ENCODE measurements at regions of chr3 and their contacts with region 1.

Region 1: DNA sequence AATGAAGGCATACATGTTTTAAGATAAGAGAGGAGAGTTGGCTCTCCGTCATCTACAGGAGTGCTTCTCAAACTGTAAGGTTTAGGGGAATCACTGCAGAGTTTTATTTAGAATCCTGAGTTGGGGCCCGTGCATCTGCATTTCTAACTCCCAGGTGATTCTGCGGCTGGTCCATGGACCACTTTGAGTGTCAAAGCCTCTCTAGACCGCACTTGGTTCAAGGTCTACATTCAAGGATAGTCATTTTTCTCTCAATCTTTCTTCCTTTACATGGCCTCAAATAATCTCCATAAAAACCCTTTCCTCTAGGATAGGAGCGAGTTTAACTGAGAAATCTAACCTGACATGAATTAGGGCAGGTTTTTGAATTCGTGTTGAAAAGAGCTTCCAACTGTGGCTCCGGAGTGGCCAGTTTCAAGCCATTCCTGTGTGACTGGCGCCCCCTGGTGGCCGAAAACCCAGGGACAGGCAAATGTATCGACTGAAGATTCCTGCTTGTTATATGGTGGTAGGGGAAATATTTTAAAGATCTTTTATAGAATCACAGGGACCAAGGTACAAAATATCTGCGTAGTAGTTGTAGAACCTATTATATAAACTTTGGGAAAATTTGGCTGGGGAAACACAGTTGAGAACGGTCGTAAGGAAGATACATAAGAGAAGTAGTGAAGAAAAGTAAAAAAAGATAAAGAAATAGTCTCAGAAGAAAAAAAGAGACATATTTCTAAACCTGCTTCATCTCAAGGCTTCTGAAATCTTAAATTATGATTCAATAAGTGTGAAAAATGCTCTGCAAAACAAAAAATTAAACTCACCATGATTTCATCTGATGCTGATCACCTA is 11.9 kb downstream of the GABRR3 start:
- DNase-seq: peak; percentile 82
- H3K4me3 Mint-ChIP-seq: no peak overlapping the region
- H3K27ac Mint-ChIP-seq: no peak overlapping the region
- H3K4me1 Mint-ChIP-seq: peaks cover 5% of the 10 kb centered on the region
- H3K27me3 Mint-ChIP-seq: no peaks in the 10 kb centered on the region
- CTCF ChIP-seq: peak; percentile 87

Region 2: GRCh38 chr3:96863129-96863740 is 1160.0 kb before region 1 on chr3:
- CTCF ChIA-PET with region 1: no interaction called
- POLR2A ChIA-PET with region 1: no interaction called
- intact Hi-C with region 1: loop called (anchors 10 kb)
- DNase-seq: peak; percentile 63
- H3K4me3 Mint-ChIP-seq: no peak overlapping the region
- H3K27ac Mint-ChIP-seq: no peak overlapping the region
- H3K4me1 Mint-ChIP-seq: no peaks in the 10 kb centered on the region
- H3K27me3 Mint-ChIP-seq: no peaks in the 10 kb centered on the region
- CTCF ChIP-seq: peak; percentile 76

Region 3: DNA sequence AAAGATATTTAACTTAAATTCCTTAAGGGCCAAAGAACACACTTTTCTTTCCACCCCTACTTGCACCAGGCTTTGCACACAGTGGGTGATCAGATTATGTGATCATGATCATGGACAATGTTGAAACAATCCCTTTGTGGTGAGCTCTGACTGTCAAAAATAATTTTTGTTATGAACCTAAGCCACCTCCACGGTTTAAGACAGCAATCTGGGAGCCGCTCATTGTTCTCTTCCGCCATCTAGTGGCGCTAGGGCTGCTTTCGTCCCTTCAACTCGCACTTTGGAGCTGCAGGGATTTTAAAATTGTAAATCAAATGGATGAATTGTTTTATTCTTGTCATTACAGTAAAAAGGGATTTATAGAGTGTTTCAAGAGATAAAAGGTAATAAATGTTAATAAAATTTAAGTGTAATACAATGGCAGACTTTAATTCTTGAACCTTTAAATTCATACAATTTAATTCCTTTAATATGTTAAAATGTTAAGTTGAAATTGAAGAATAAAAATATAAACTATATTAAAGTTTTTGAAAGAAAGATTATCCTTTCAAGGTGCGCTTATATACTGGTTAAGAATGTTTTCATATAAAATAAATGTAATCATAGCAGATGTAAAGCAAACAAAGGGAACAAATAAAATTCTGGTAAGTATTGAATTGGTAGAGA is 303.9 kb before region 1 on chr3:
- CTCF ChIA-PET with region 1: interaction called, 6 read pairs
- POLR2A ChIA-PET with region 1: no interaction called
- intact Hi-C with region 1: loop called (anchors 2 kb)
- DNase-seq: peak; percentile 83
- H3K4me3 Mint-ChIP-seq: peak overlapping the region; percentile 28
- H3K27ac Mint-ChIP-seq: no peak overlapping the region
- H3K4me1 Mint-ChIP-seq: no peaks in the 10 kb centered on the region
- H3K27me3 Mint-ChIP-seq: peaks cover 10% of the 10 kb centered on the region
- CTCF ChIP-seq: peak; percentile 84

Region 4: GRCh38 chr3:97804471-97804870 is 218.7 kb before region 1 on chr3:
- CTCF ChIA-PET with region 1: interaction called, 22 read pairs
- POLR2A ChIA-PET with region 1: no interaction called
- intact Hi-C with region 1: no loop called
- DNase-seq: no peak
- H3K4me3 Mint-ChIP-seq: no peak overlapping the region
- H3K27ac Mint-ChIP-seq: no peak overlapping the region
- H3K4me1 Mint-ChIP-seq: peaks cover 1% of the 10 kb centered on the region
- H3K27me3 Mint-ChIP-seq: no peaks in the 10 kb centered on the region
- CTCF ChIP-seq: no peak

Region 5: GRCh38 chr3:97871801-97872524 is 151.2 kb before region 1 on chr3:
- CTCF ChIA-PET with region 1: interaction called, 4 read pairs
- POLR2A ChIA-PET with region 1: interaction called, 11 read pairs
- intact Hi-C with region 1: no loop called
- DNase-seq: peak; percentile 83
- H3K4me3 Mint-ChIP-seq: peak overlapping the region; percentile 60
- H3K27ac Mint-ChIP-seq: peak overlapping the region; percentile 92
- H3K4me1 Mint-ChIP-seq: peaks cover 32% of the 10 kb centered on the region
- H3K27me3 Mint-ChIP-seq: no peaks in the 10 kb centered on the region
- CTCF ChIP-seq: no peak

Region 6: GRCh38 chr3:97940034-97940433 is 83.2 kb before region 1 on chr3:
- CTCF ChIA-PET with region 1: interaction called, 12 read pairs
- POLR2A ChIA-PET with region 1: no interaction called
- intact Hi-C with region 1: loop called (anchors 5 kb)
- DNase-seq: peak; percentile 23
- H3K4me3 Mint-ChIP-seq: no peak overlapping the region
- H3K27ac Mint-ChIP-seq: no peak overlapping the region
- H3K4me1 Mint-ChIP-seq: no peaks in the 10 kb centered on the region
- H3K27me3 Mint-ChIP-seq: no peaks in the 10 kb centered on the region
- CTCF ChIP-seq: no peak

Region 7: GRCh38 chr3:97971677-97972567 is 51.3 kb before region 1 on chr3 and contains the start of gene RIOX2:
- CTCF ChIA-PET with region 1: interaction called, 40 read pairs
- POLR2A ChIA-PET with region 1: interaction called, 11 read pairs
- intact Hi-C with region 1: loop called (anchors 2 kb)
- DNase-seq: peak; percentile 69
- H3K4me3 Mint-ChIP-seq: peak within 1 kb of the TSS; percentile 77
- H3K27ac Mint-ChIP-seq: peak within 1 kb of the TSS; percentile 25
- H3K4me1 Mint-ChIP-seq: peaks cover 25% of the 10 kb centered on the region
- H3K27me3 Mint-ChIP-seq: no peaks in the 10 kb centered on the region
- CTCF ChIP-seq: no peak
- total RNA-seq, gene RIOX2: 51.8 and 73.9 TPM in 2 replicates